Psoas muscle (tissue), 8 donors: ENCODE measurements at regions of chr12 and their contacts with region 1.

Region 1: GRCh38 chr12:123478762-123479161 is 20.8 kb downstream of the SNRNP35 start:
- DNase-seq: peak; percentile 74 to 92
- ATAC-seq: peak; percentile 86 to 89 (median 88)
- H3K4me3 ChIP-seq: peak overlapping the region; percentile 44
- H3K27ac ChIP-seq: peak overlapping the region; percentile 97
- H3K4me1 ChIP-seq: peaks cover 49% of the 10 kb centered on the region
- H3K27me3 ChIP-seq: no peaks in the 10 kb centered on the region
- CTCF ChIP-seq: no peak

Region 2: GRCh38 chr12:123427036-123427769 is 51.6 kb before region 1 on chr12:
- intact Hi-C with region 1: no loop called
- DNase-seq: no peak
- ATAC-seq: no peak
- H3K4me3 ChIP-seq: no peak overlapping the region
- H3K27ac ChIP-seq: no peak overlapping the region
- H3K4me1 ChIP-seq: no peaks in the 10 kb centered on the region
- H3K27me3 ChIP-seq: no peaks in the 10 kb centered on the region
- CTCF ChIP-seq: no peak

Region 3: GRCh38 chr12:123519141-123520001 is 40.6 kb after region 1 on chr12:
- intact Hi-C with region 1: loop called (anchors 5 kb)
- DNase-seq: peak; percentile 81 to 88
- ATAC-seq: peak; percentile 87 to 91 (median 88)
- H3K4me3 ChIP-seq: peak overlapping the region; percentile 23
- H3K27ac ChIP-seq: peak overlapping the region; percentile 90
- H3K4me1 ChIP-seq: peaks cover 17% of the 10 kb centered on the region
- H3K27me3 ChIP-seq: no peaks in the 10 kb centered on the region
- CTCF ChIP-seq: no peak

Region 4: DNA sequence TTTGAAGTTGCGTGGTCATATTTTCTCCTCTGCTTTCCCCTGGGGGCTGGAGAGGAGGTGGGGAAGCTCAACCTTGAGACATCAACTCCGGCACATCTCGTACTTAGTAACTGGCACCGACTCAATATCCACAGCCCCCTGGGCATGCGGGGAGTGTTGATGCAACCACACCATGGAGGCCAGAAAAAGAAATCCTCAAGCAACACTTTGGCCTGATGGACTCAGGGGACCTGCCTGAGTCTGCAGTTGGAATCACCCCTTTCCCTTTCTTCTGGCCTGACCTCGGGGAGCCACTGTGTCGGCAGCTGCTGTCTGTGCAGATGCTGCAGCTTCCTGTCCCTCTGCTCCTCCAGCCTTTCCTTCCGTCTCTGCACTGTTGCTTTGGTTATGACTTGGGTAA is 1575.1 kb after region 1 on chr12:
- intact Hi-C with region 1: no loop called
- DNase-seq: peak; percentile 27 to 83
- ATAC-seq: peak in 1 of 4 donors; percentile 18
- H3K4me3 ChIP-seq: no peak overlapping the region
- H3K27ac ChIP-seq: no peak overlapping the region
- H3K4me1 ChIP-seq: no peaks in the 10 kb centered on the region
- H3K27me3 ChIP-seq: no peaks in the 10 kb centered on the region
- CTCF ChIP-seq: no peak